GM23248 (cell line): ENCODE measurements at regions of chr20 and their contacts with region 1.

Region 1: DNA sequence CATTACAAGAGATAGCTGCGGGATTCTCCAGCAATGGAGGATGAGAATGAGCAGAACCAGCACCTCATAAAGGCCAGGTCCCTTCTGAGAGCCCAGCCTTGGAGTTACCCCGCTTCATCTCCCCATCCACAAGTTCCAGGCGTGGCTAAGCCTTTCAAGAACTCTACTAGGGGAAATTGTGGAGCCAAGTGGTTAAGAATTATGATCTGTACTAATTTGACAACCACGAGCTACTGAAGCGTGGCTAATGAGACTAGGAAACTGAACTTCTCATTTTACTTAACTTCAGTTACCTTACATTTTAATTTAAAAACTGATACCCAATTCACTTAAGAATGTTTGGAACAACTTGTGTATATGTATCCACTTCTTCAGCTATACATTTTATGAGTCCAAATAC is 401.0 kb downstream of the PTPRT start:
- DNase-seq: no peak
- H3K4me3 ChIP-seq: no peak overlapping the region
- H3K27ac ChIP-seq: no peak overlapping the region
- H3K4me1 ChIP-seq: no peaks in the 10 kb centered on the region
- H3K27me3 ChIP-seq: no peaks in the 10 kb centered on the region

Region 2: GRCh38 chr20:42846784-42847490 is 58.2 kb after region 1 on chr20:
- in situ Hi-C with region 1: loop called (anchors 10 kb)
- DNase-seq: no peak
- H3K4me3 ChIP-seq: no peak overlapping the region
- H3K27ac ChIP-seq: no peak overlapping the region
- H3K4me1 ChIP-seq: no peaks in the 10 kb centered on the region
- H3K27me3 ChIP-seq: no peaks in the 10 kb centered on the region